PC-9 (cell line): ENCODE measurements at regions of chrX and their contacts with region 1.

Region 1: GRCh38 chrX:119693040-119693995 is at the start of gene SEPTIN6:
- DNase-seq: peak; percentile 65 to 85
- H3K4me3 ChIP-seq: peak within 1 kb of the TSS; percentile 81
- H3K27ac ChIP-seq: no peak within 1 kb of the TSS
- H3K4me1 ChIP-seq: peaks cover 13% of the 10 kb centered on the region
- H3K27me3 ChIP-seq: no peaks in the 10 kb centered on the region
- CTCF ChIP-seq: no peak
- total RNA-seq, gene SEPTIN6: 32.8 and 43.7 TPM in 2 replicates

Region 2: DNA sequence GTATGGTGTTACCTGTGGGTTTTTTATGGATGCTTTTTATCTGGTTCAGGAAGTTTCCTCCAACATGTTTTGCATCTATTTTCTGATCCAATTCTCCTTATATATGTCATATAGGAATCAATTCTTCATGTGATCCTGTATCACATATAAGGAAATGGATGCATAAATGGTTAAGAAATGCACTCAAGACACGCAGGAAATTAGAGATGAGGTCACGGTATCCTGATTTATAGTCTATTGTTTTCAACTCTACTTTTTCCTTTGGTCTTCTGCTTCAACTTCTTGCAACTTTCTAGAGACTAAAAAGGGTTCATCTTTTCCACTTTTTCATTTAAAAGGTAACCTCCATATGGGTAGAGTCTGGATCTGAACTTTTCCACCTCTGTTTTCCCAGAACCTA is 999.5 kb before region 1 on chrX:
- CTCF ChIA-PET with region 1: no interaction called
- POLR2A ChIA-PET with region 1: no interaction called
- intact Hi-C with region 1: no loop called
- DNase-seq: no peak
- H3K4me3 ChIP-seq: no peak overlapping the region
- H3K27ac ChIP-seq: no peak overlapping the region
- H3K4me1 ChIP-seq: no peaks in the 10 kb centered on the region
- H3K27me3 ChIP-seq: no peaks in the 10 kb centered on the region
- CTCF ChIP-seq: no peak

Region 3: DNA sequence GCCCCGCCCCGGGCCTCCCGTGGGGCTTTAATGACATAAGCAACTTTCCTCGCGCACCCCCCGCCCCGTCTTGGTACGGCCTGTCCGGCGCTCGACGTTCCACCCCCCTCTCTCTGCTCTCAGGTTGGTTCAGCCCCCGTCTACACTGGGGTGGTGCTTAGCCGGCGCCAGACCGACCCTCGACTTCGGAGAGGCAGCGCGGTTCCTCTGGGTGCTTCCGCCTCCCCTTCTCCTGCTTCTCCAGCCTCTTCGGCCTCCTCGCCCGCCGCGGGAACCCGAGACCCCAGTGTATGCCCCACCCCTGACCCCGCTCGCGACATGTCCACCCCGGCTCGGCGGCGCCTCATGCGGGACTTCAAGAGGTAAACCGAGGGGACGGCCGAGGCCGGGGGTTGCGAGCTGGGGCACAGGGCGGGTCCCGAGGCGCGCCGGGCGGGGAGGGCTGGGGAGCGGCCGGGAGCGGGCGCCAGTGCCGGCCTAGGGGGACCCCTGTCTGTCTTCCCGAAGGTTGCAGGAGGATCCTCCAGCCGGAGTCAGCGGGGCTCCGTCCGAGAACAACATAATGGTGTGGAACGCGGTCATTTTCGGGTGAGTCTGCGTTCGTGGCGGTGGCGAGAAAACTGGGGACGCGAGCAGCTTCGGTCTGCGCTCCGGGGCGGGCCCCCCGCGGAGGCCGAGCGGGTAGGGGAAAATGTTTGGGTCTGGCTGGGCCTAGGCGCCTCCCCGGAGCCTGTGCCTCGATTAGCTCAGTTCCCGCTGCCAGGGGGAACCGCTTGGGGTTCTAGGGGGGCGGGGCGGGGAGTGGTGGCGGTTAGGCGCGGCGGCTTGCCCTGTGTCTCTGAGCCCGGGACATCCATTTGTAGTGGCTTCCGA is 118.7 kb before region 1 on chrX and contains the start of gene UBE2A:
- CTCF ChIA-PET with region 1: interaction called, 6 read pairs
- POLR2A ChIA-PET with region 1: interaction called, 3 read pairs
- intact Hi-C with region 1: loop called (anchors 5 kb)
- DNase-seq: peak; percentile 86 to 93
- H3K4me3 ChIP-seq: peak within 1 kb of the TSS; percentile 83
- H3K27ac ChIP-seq: peak within 1 kb of the TSS; percentile 83
- H3K4me1 ChIP-seq: peaks cover 27% of the 10 kb centered on the region
- H3K27me3 ChIP-seq: no peaks in the 10 kb centered on the region
- CTCF ChIP-seq: peak; percentile 61; the same call in 1 of the 2 replicates
- total RNA-seq, gene UBE2A: 103 and 119 TPM in 2 replicates

Region 4: DNA sequence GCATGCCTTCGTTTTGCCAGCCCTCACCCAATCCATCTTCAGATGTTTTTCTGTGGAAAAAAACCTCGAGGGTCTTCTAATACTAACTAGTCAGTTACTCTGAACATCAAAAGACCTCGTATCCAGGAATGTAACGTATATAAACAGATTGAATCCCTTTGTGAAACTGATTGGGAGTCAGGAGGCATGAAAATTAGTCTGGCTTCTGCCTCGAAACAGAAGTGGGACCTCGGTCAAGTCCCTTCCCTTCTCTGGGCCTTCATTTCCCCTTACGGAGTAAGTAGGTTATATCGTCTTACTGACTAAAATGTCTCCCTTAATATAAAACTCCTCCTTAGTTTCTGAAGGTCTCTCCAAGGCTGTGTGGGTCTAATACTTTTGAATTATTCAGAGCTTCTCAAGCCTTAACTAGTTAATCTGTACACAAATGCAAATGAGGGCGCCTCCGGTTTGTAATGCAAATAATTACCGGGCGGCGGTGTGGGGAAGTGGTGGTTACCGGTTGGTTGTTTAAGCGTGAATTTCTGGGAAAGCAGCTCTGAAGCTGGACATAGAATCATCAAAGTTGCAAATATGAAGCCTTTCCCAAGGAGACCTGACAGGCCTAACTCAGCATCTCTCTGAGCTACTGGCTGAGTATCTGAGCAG is 75.7 kb before region 1 on chrX:
- CTCF ChIA-PET with region 1: interaction called, 10 read pairs
- POLR2A ChIA-PET with region 1: no interaction called
- intact Hi-C with region 1: no loop called
- DNase-seq: no peak
- H3K4me3 ChIP-seq: no peak overlapping the region
- H3K27ac ChIP-seq: no peak overlapping the region
- H3K4me1 ChIP-seq: no peaks in the 10 kb centered on the region
- H3K27me3 ChIP-seq: no peaks in the 10 kb centered on the region
- CTCF ChIP-seq: no peak

Region 5: DNA sequence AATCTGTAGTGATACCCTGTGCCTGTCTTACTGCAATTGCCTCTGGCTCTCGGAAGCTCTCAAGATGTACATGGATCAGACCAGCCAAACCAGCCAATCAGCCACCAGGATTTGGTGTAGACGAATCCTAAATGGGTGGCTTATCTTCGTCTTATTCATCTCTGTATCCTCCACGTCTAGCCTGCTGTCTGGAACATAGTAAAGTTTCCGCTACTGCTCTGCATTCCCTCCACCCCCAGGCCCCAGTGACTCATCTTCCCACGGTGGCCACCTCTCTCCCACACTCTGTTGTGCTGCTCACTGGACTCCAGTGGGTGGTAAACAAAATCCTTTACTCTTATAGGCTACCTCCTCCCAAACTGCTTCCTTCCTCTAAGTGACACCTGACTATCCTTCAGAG is 38.2 kb before region 1 on chrX:
- CTCF ChIA-PET with region 1: interaction called, 13 read pairs
- POLR2A ChIA-PET with region 1: no interaction called
- intact Hi-C with region 1: no loop called
- DNase-seq: peak in 1 of 2 experiments; percentile 7
- H3K4me3 ChIP-seq: no peak overlapping the region
- H3K27ac ChIP-seq: no peak overlapping the region
- H3K4me1 ChIP-seq: peaks cover 18% of the 10 kb centered on the region
- H3K27me3 ChIP-seq: no peaks in the 10 kb centered on the region
- CTCF ChIP-seq: no peak

Region 6: GRCh38 chrX:119729408-119730201 is 36.3 kb after region 1 on chrX:
- CTCF ChIA-PET with region 1: interaction called, 5 read pairs
- POLR2A ChIA-PET with region 1: no interaction called
- intact Hi-C with region 1: loop called (anchors 2 kb)
- DNase-seq: peak; percentile 57 to 63
- H3K4me3 ChIP-seq: no peak overlapping the region
- H3K27ac ChIP-seq: no peak overlapping the region
- H3K4me1 ChIP-seq: no peaks in the 10 kb centered on the region
- H3K27me3 ChIP-seq: no peaks in the 10 kb centered on the region
- CTCF ChIP-seq: peak; percentile 78

Region 7: DNA sequence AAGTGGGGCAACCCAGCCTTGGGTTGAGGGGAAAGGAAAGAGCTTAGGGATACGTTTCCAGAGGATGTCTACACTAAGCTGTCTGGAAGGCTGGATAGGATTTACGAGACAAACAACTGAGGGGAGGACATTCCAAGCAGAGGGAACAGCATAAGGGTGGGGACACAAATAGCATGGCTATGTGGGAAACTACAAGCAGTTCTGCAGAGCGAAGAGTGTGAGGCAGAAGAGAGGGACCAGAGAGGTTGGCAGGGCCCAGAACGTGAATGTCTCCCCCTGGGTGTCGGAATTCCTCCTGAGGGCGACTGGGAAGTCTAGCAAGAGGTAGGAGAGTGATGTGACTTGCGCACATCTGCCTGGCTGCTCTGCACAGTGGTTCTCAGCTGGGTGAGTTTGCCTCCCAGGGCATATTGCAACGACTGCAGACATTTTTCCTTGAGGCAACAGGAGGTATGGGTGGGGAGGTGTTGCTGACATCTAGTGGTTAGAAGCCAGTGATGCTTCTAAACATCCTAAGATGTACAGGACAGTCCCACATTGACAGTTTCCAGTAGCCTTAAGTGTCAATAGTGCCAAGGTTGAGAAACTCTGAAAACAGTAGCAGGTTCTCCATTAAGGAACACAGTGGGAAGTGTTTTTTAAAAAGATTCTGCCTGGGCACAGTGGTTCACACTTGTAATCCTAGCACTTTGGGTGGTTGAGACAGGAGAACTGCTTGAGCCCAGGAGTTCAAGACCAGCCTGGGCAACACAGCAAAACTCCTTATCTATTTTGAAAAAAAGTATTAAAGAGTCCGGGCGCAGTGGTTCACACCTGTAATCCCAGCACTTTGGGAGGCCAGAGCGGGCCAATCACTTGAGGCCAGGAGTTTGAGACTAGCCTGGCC is 187.5 kb after region 1 on chrX:
- CTCF ChIA-PET with region 1: no interaction called
- POLR2A ChIA-PET with region 1: no interaction called
- intact Hi-C with region 1: loop called (anchors 10 kb)
- DNase-seq: peak; percentile 37 to 67
- H3K4me3 ChIP-seq: no peak overlapping the region
- H3K27ac ChIP-seq: no peak overlapping the region
- H3K4me1 ChIP-seq: no peaks in the 10 kb centered on the region
- H3K27me3 ChIP-seq: no peaks in the 10 kb centered on the region
- CTCF ChIP-seq: peak; percentile 67